PC-9 (cell line): ENCODE measurements at regions of chr2 and their contacts with region 1.

Region 1: GRCh38 chr2:178732913-178733312 is 74.3 kb downstream of the TTN start:
- DNase-seq: no peak
- H3K4me3 ChIP-seq: no peak overlapping the region
- H3K27ac ChIP-seq: no peak overlapping the region
- H3K4me1 ChIP-seq: no peaks in the 10 kb centered on the region
- H3K27me3 ChIP-seq: peaks cover 76% of the 10 kb centered on the region
- CTCF ChIP-seq: no peak

Region 2: GRCh38 chr2:178692845-178693244 is 40.1 kb before region 1 on chr2:
- CTCF ChIA-PET with region 1: no interaction called
- POLR2A ChIA-PET with region 1: interaction called, 10 read pairs
- intact Hi-C with region 1: no loop called
- DNase-seq: no peak
- H3K4me3 ChIP-seq: no peak overlapping the region
- H3K27ac ChIP-seq: no peak overlapping the region
- H3K4me1 ChIP-seq: no peaks in the 10 kb centered on the region
- H3K27me3 ChIP-seq: no peaks in the 10 kb centered on the region
- CTCF ChIP-seq: no peak

Region 3: DNA sequence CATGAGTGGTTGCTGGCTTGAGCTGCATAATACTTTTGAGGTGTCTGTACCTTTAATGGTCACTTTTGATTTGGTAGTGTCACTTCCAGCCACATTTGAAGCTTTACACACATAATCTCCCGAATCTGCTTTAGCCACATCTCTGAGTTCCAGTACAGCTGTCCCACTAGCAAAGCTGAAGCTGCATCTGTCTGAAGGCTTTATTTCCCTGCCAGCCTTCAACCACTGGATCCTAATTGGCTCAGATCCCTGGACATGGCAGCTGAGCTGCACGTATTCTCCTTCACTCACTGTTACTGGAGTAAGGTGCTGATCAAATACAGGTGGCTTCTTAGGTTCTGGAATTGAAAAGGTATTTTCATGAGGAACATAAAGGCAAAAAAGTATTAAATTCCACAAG is 25.4 kb before region 1 on chr2:
- CTCF ChIA-PET with region 1: no interaction called
- POLR2A ChIA-PET with region 1: no interaction called
- intact Hi-C with region 1: no loop called
- DNase-seq: no peak
- H3K4me3 ChIP-seq: no peak overlapping the region
- H3K27ac ChIP-seq: no peak overlapping the region
- H3K4me1 ChIP-seq: no peaks in the 10 kb centered on the region
- H3K27me3 ChIP-seq: peaks cover under 1% of the 10 kb centered on the region; the same call in 1 of the 2 replicates
- CTCF ChIP-seq: no peak

Region 4: GRCh38 chr2:178718283-178718682 is 14.6 kb before region 1 on chr2:
- CTCF ChIA-PET with region 1: no interaction called
- POLR2A ChIA-PET with region 1: no interaction called
- intact Hi-C with region 1: no loop called
- DNase-seq: no peak
- H3K4me3 ChIP-seq: no peak overlapping the region
- H3K27ac ChIP-seq: no peak overlapping the region
- H3K4me1 ChIP-seq: no peaks in the 10 kb centered on the region
- H3K27me3 ChIP-seq: peaks cover 95% of the 10 kb centered on the region
- CTCF ChIP-seq: no peak

Region 5: DNA sequence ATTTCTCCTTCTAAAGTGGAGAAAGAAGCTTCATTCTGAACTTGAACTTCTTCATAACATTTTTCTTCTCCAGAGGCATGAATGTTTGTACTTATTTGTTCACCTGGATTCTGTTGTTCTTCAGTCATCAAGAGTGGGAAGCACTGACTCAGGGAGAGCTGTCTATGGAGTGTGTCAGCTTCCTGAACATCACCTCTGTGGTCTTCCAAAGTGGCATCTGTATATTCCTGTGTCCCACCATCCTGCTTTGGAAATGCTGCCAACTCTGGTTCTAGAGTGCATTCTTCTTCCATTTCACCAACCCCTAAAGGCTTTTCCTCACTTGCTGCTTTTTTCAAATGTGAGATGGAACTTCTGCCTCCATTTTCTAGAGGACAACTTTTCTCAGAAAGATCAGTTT is 14.9 kb after region 1 on chr2:
- CTCF ChIA-PET with region 1: no interaction called
- POLR2A ChIA-PET with region 1: interaction called, 11 read pairs
- intact Hi-C with region 1: no loop called
- DNase-seq: no peak
- H3K4me3 ChIP-seq: no peak overlapping the region
- H3K27ac ChIP-seq: no peak overlapping the region
- H3K4me1 ChIP-seq: no peaks in the 10 kb centered on the region
- H3K27me3 ChIP-seq: no peaks in the 10 kb centered on the region
- CTCF ChIP-seq: no peak